ENCODE measurements at regions of chr2 and their contacts with region 1.

Region 1: DNA sequence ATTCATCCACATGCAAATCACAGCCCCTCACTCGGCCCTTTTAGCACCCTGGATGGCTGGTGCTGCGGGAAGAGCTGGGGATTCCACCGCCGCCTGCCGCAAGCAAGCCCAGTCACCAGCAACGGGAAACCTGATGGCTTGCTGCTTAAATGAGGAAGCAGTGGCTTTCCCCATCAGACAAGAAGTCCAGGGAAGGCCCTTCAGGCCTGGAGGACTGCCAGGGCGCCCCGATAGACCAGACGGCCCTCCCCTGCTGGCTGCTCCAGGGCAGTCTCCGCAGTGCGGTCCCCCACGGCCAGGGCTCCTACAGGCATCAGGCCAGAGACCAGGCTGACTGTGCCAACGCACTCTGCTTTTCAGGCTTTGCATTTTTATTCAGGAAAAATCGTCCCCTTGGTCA is 439.1 kb downstream of the EIPR1 start:
- DNase-seq: no peak
- H3K4me3 ChIP-seq: no peak overlapping the region
- H3K27ac ChIP-seq: no peak overlapping the region
- H3K4me1 ChIP-seq: no peaks in the 10 kb centered on the region
- H3K27me3 ChIP-seq: no peaks in the 10 kb centered on the region
- CTCF ChIP-seq: no peak
- POLR2A ChIP-seq: no peak

Region 2: DNA sequence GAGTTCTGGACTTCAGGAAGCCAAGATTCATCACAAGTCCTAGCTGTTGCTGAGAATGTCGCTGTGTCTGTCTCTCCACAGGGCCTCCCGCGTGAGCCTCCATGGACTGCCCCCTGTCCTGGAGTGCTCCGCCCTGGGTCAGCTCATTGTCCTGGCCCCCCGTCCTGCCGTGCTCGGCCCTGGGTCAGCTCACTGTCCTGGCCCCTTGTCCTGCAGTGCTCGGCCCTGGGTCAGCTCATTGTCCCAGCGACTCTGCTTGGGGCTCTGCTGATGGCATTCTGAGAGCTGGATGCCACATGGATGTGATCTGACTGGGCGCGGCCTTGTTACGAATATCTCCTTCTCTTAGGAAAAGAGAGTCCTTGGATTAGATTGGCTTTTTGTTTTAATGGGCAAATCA is 360.6 kb after region 1 on chr2:
- intact Hi-C with region 1: loop called (anchors 5 kb)
- DNase-seq: no peak
- H3K4me3 ChIP-seq: no peak overlapping the region
- H3K27ac ChIP-seq: no peak overlapping the region
- H3K4me1 ChIP-seq: no peaks in the 10 kb centered on the region
- H3K27me3 ChIP-seq: no peaks in the 10 kb centered on the region
- CTCF ChIP-seq: no peak
- POLR2A ChIP-seq: no peak

Measured in breast epithelium (tissue), 4 donors.